ENCODE measurements at regions of chr11 and their contacts with region 1.

Region 1: DNA sequence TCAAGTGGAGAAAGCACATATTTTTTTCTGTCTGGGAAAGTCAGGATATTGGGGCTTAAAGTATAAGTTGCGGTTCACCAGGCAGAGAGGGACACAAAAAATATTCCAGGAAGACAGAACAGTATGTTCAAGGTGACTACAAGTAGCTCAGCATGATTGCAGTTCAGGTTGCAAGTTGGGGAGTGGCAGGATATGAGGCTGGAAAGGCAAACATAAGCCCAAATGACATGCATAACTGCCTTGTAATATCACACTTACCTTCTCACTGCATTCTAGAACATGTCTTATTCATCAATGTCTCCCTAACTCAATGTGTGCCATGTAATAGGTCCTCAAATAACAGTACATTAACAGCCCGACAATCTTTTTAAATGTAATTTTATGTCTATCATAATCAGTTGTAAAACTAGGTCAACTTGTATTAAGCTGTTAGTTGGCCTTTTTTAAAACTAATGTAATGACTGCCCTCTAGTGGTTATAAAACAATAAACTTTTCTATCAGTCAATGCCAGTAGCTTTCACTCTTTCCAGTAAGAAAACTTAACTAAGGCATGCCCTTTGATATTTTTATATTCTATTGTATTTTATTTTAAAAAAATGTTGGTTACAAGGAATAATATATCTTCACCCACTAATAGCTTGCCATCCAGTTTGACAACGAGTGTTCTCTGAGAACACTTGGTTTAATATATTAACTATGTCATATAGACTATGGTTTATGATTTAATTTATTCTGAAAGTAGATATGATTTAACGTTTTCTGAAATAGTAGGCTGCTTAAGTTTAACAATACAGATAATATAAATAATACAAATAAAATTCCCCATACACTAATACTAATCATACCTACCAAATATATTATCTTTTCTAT is 39.4 kb upstream of the CFAP300 start:
- DNase-seq: no peak
- H3K4me3 ChIP-seq: no peak overlapping the region
- H3K27ac ChIP-seq: peak overlapping the region in 2 of 4 donors; percentile 47 to 50
- H3K4me1 ChIP-seq: peaks cover 8 to 26% (median 22%) of the 10 kb centered on the region in 4 donors
- H3K27me3 ChIP-seq: no peaks in the 10 kb centered on the region
- CTCF ChIP-seq: peak; percentile 50 to 60 (median 53)
- EP300 ChIP-seq: no peak
- POLR2A ChIP-seq: no peak

Region 2: GRCh38 chr11:101860696-101861427 is 146.9 kb before region 1 on chr11:
- intact Hi-C with region 1: loop called (anchors 2 kb)
- DNase-seq: no peak
- H3K4me3 ChIP-seq: no peak overlapping the region
- H3K27ac ChIP-seq: peak overlapping the region in 1 of 4 donors; percentile 22
- H3K4me1 ChIP-seq: peaks cover 0 to 31% (median 27%) of the 10 kb centered on the region in 4 donors
- H3K27me3 ChIP-seq: no peaks in the 10 kb centered on the region
- CTCF ChIP-seq: peak; percentile 80 to 89 (median 80)
- EP300 ChIP-seq: no peak
- POLR2A ChIP-seq: no peak

Region 3: GRCh38 chr11:101914738-101915426 is 92.9 kb before region 1 on chr11 and contains the start of gene CEP126:
- intact Hi-C with region 1: loop called (anchors 5 kb)
- DNase-seq: peak; percentile 98
- H3K4me3 ChIP-seq: peak within 1 kb of the TSS; percentile 67 to 93 (median 79)
- H3K27ac ChIP-seq: peak within 1 kb of the TSS; percentile 86 to 91 (median 87)
- H3K4me1 ChIP-seq: peaks cover 11 to 38% (median 34%) of the 10 kb centered on the region in 4 donors
- H3K27me3 ChIP-seq: no peaks in the 10 kb centered on the region
- CTCF ChIP-seq: peak; percentile 46 to 57 (median 54)
- EP300 ChIP-seq: no peak
- POLR2A ChIP-seq: no peak
- total RNA-seq, gene CEP126: 6.6 to 11.3 (median 10.1) TPM

Region 4: GRCh38 chr11:102073253-102073652 is 65.5 kb after region 1 on chr11:
- intact Hi-C with region 1: no loop called
- DNase-seq: no peak
- H3K4me3 ChIP-seq: no peak overlapping the region
- H3K27ac ChIP-seq: no peak overlapping the region
- H3K4me1 ChIP-seq: no peaks in the 10 kb centered on the region
- H3K27me3 ChIP-seq: no peaks in the 10 kb centered on the region
- CTCF ChIP-seq: no peak
- EP300 ChIP-seq: no peak
- POLR2A ChIP-seq: no peak

Region 5: DNA sequence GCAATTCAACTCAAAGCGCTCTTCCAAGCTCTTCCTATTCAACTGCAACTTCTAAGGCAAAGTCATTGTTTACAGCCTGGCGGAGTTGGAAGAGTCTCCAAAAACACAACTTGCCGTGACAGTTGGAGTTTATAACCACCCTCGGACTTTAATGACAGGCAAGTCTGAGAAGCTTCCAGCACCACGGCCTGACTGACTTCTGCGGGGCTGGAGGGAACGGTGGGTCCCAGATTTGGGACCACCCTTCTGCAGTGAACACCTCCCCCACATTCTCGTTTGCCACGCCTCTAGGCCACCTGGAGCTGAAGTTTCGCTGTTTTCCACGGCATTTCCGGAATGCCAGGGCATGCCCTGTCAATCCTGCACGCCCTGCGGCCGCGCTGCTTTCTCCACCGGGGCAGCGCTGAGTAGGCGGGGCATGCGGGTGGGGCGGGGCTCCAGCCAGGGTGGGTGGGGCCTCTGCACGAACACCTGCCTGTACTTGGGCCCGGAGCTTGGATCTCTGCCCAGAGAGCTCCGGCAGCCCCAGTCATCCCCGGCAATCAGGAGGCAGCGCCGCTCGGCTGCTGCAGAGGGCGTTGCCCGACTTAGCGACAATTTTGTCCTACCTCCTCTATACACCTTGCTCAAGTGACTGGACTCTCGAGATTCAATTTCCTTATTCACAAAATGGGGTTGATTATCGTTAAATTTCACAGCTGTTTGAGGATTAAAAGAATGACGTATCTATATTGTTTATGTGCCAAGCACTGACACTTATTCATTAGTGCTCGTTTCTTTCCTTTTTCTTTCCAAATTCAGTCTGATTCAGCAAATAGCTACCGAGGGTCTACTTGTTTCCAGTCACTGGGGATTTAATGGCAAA is 260.8 kb after region 1 on chr11:
- intact Hi-C with region 1: loop called (anchors 5 kb)
- DNase-seq: no peak
- H3K4me3 ChIP-seq: peak overlapping the region; percentile 47 to 58 (median 50)
- H3K27ac ChIP-seq: peak overlapping the region; percentile 40 to 46 (median 40)
- H3K4me1 ChIP-seq: peaks cover 6 to 16% (median 14%) of the 10 kb centered on the region in 4 donors
- H3K27me3 ChIP-seq: no peaks in the 10 kb centered on the region
- CTCF ChIP-seq: peak; percentile 51 to 69 (median 67)
- EP300 ChIP-seq: no peak
- POLR2A ChIP-seq: no peak